ENCODE measurements at regions of chr2 and their contacts with region 1.

Region 1: DNA sequence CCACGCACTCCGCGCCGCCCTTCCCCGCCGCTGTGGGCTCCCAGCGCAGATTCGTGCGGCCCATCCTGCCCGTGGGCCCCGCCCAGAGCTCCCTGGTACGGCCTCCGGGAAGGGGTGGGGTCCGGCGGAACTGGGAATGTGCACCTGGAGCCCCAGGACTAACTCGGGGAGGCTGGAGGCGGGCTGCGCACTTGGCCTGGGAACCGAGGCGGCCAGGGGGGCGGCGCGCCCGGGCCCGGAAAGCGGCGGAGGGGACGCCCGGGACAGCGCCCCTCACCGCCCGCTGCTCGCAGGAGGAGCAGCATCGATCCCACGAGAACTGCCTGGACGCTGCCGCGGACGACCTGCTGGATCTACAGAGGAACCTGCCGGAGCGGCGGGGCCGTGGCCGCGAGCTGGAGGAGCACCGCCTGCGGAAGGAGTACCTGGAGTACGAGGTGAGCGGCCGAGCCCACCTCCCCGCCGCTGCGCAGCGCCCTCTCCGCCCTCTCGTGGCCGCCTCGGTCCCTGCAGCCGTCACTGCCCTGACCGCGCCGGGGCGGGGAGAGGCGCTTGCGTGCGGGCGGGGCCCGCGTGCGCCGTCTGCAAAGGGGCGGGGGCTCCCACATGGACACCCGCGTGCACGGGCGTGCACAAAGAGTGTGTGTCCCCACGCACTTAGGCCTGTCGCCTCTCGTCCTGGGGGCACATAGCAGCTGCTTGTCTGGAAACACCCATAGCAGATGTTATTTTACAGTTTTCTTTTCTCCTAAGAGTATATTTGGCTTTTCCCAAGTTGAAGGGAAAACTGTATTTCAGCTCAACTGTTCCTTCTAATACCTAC is 25.2 kb downstream of the PSD4 start:
- DNase-seq: peak; percentile 62
- H3K4me3 ChIP-seq: peak overlapping the region; percentile 37 to 57 (median 55)
- H3K27ac ChIP-seq: no peak overlapping the region
- H3K4me1 ChIP-seq: peaks cover 6% of the 10 kb centered on the region
- H3K27me3 ChIP-seq: peaks cover 0 to 1% of the 10 kb centered on the region in 2 experiments
- CTCF ChIP-seq: peak; percentile 89 to 91
- POLR2A ChIP-seq: no peak

Region 2: GRCh38 chr2:112301171-112301584 is 897.8 kb before region 1 on chr2:
- CTCF ChIA-PET with region 1: no interaction called
- POLR2A ChIA-PET with region 1: no interaction called
- dilution Hi-C with region 1: no loop called
- intact Hi-C with region 1: no loop called
- DNase-seq: peak; percentile 85
- H3K4me3 ChIP-seq: no peak overlapping the region
- H3K27ac ChIP-seq: peak overlapping the region; percentile 73
- H3K4me1 ChIP-seq: peaks cover 28% of the 10 kb centered on the region
- H3K27me3 ChIP-seq: no peaks in the 10 kb centered on the region
- CTCF ChIP-seq: no peak
- POLR2A ChIP-seq: peak; percentile 48

Region 3: DNA sequence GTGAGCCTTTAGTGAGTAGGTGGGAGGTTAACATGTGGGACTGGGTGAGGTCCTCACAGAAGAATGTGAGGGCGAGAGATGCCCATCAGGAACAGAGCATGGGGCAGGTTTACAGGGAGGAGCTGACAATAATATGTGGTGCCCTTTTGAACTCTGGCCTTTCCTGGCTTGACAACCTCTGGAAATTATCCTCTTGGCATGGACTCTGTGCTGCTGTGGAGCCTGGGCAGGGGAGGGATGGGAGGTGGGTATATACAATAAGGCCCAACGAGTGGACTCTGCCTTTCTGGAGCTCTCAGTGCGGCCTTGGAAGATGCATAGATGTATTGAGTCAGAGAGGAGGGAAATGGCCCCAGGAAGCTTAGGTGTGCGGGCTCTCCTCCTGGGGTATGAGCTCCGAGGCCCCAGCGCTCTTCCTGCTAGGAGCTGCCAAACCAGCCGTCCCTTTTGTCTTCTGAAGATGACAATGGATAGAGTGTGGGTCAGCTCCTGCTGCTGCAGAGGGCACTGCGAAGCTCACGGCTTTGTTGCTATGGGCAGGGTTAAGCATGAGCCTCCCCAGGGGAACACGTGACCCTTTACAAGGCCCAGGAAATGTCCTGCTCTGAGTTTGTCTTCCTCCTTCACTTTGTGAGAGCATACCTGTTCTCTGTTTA is 33.9 kb before region 1 on chr2:
- CTCF ChIA-PET with region 1: interaction called, 11 read pairs
- POLR2A ChIA-PET with region 1: no interaction called
- dilution Hi-C with region 1: no loop called
- intact Hi-C with region 1: loop called (anchors 2 kb)
- DNase-seq: no peak
- H3K4me3 ChIP-seq: no peak overlapping the region
- H3K27ac ChIP-seq: no peak overlapping the region
- H3K4me1 ChIP-seq: peaks cover 4% of the 10 kb centered on the region
- H3K27me3 ChIP-seq: peaks cover 0 to 20% of the 10 kb centered on the region in 2 experiments
- CTCF ChIP-seq: no peak
- POLR2A ChIP-seq: no peak

Region 4: DNA sequence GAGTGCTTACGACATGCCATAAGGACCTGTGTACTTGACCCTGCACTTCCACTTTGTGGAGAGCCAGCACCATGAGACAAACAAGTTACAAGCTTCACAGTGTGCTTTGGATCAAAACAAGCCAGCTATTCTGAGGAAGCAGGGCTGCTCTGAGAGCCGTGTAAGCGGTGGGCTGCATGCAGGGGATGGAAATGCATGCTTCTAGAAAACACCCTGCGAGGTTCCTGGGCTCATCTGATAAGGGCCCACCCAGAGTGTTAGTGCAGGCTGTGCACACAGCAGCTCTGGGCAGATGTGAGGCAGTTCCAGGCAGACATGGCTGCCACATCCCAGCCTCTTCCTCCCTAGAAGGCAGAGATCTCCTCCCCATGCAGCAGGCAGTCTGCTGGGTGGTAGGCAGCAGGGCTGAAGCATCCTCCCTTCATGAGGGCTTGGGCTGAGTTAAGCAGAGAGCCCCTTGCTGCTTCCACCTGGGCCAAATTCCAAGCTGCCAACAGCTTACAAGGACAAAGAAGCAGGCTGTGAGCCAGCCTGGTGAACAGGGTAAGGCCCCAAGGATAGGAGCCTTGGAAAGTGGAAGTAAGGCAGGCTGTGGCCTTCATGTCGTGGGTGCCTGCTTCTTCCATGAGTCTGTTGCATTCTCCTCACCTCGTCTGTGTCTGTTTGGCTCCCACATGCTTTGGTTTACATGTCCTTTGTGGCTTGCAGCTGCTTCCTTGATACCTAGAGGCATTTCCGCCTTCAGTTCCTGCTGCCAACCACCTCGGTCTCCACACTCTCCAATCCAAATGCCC is 17.5 kb before region 1 on chr2:
- CTCF ChIA-PET with region 1: interaction called, 15 read pairs
- POLR2A ChIA-PET with region 1: no interaction called
- dilution Hi-C with region 1: no loop called
- intact Hi-C with region 1: no loop called
- DNase-seq: peak; percentile 12
- H3K4me3 ChIP-seq: no peak overlapping the region
- H3K27ac ChIP-seq: no peak overlapping the region
- H3K4me1 ChIP-seq: no peaks in the 10 kb centered on the region
- H3K27me3 ChIP-seq: peaks cover 0 to 2% of the 10 kb centered on the region in 2 experiments
- CTCF ChIP-seq: no peak
- POLR2A ChIP-seq: no peak

Region 5: DNA sequence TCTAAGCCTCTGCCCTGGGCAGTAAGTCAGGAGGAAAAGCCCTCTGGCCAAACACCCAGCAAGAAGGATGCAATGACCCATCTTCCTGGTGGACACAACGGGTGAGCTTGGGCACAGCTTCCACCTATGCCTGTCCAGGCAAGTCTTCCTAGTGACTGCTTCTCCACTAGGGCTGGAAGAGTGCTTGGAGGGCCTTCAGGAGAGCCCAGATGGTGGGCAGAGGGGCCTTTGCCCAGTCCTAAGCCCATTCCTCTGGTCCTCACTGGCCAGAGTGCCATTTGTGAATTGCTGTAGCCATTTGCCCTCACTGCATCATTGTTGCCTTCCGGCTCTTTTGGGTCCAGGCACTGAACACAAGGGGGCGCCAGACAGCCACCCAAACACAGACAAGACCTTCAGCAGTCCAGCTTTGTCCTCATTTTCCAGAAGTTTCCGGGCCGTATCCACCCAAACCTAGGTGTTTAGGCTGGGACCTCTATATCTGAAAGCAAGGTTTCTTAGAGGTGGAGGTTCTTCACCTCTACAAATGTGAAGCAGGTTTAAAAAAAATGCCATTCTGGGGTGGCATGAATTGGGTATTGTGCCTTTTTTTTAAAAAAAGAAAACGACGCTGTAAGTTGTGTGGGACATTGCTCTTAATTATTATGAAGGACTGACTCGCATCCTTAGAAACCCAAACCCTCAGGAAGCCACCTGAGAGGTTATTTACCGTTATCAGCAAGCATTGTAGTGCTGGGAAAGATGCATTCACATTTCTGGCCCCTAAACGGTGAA is 50.2 kb after region 1 on chr2:
- CTCF ChIA-PET with region 1: interaction called, 109 read pairs
- POLR2A ChIA-PET with region 1: no interaction called
- dilution Hi-C with region 1: no loop called
- intact Hi-C with region 1: loop called (anchors 1 kb)
- DNase-seq: peak; percentile 67
- H3K4me3 ChIP-seq: no peak overlapping the region
- H3K27ac ChIP-seq: no peak overlapping the region
- H3K4me1 ChIP-seq: no peaks in the 10 kb centered on the region
- H3K27me3 ChIP-seq: no peaks in the 10 kb centered on the region
- CTCF ChIP-seq: peak; percentile 90 to 91
- POLR2A ChIP-seq: no peak

Region 6: DNA sequence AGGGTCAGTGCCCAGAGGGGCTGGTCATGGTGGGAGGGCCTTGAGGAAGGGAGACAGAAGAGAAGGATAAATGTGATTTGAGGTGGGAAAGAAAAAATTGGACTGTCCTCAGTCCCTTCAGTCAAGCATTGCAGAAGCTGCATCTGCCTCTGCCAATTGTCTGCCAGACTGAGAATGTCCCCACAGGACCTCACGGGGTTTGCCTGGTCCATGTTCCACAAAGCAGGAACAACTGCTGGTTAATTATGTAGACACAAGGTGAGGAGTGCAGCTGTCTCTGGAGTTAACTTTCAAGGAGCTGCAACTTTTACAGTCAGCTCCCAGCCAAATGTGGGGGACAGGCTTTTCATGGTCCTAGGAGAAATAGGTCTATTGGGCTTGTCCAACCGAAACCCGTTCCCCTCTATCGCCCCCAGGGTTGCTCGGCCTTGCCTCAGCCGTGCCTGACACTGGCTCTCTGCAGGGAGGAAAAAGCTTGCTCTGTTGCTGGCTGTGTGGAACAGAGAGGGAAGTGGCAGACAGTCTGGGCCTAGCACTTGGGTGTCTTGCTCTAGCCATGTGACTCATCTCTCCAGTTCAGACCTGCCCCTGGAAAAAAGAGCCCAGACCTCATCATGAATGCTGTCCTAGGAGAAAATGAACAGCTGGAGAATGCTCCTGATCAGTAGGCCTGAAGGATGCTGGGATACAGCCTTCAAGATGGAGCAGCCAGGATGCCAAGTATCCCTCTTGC is 110.8 kb after region 1 on chr2:
- CTCF ChIA-PET with region 1: no interaction called
- POLR2A ChIA-PET with region 1: no interaction called
- dilution Hi-C with region 1: no loop called
- intact Hi-C with region 1: no loop called
- DNase-seq: no peak
- H3K4me3 ChIP-seq: no peak overlapping the region
- H3K27ac ChIP-seq: no peak overlapping the region
- H3K4me1 ChIP-seq: no peaks in the 10 kb centered on the region
- H3K27me3 ChIP-seq: peaks cover 3 to 4% of the 10 kb centered on the region in 2 experiments
- CTCF ChIP-seq: no peak
- POLR2A ChIP-seq: no peak